Breast epithelium (tissue), 4 donors: ENCODE measurements at regions of chr10 and their contacts with region 1.

Region 1: DNA sequence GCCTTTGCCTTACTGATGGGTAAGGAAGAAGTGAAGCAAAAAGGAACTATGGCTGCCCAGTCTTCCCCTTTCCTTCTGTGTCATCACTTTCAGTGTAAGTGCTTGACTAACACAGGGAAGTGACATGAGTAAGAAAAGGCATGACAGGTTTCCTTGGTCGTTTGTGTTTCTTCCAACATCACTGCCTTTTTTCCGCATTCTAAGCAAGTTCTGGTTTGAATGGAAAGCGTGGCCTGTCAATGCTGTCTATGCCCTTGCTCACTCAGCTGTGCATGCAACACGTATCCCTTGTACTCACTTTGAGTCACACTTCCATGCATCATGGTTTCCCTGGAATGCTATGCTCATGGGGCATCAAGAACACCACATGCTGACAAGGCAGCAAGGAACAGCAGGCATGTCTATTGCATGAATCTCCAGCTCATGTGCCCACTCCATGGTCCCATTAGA is 111.8 kb downstream of the OAT start:
- DNase-seq: no peak
- H3K4me3 ChIP-seq: no peak overlapping the region
- H3K27ac ChIP-seq: no peak overlapping the region
- H3K4me1 ChIP-seq: no peaks in the 10 kb centered on the region
- H3K27me3 ChIP-seq: no peaks in the 10 kb centered on the region
- CTCF ChIP-seq: no peak
- POLR2A ChIP-seq: no peak

Region 2: DNA sequence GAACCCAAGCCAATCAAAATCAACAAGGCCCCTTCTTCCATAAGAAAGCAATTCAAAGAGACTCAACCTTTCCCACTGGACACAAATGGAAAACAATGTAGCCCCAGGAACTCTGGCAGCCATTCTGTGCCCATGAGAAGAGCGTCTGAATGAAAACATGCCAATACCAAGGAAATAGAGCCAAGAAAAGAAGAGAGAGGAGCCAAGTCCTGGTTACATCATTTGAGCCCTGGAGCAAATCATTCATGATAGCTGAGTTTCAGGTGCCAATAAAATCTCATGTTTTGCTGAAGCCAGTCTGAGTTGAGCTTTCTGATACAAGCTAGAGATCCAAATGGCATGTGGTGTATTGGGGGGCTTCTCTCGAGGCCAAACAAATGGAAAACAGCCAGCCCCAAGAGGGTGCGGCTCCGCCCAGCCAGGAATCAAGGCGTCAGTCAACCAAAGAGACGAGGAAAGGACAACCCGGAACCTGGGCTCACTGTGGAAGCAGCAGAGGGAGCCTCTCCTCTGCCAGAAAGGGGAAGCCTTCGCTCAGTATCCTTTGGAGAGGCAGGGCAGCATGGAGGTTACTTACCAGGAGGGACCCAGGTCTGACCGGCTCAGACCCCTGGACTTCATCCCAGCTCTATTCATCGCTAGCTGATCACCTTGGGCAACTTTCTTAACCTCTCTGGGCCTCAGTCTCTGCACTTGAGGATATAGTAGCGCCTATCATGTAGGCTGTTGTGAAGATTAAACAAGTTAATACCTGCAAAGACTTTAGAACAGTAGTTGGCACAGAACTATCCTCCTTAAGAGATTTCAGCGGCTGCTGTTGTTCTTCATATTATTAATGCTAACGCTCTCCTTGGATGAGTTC is 50.0 kb after region 1 on chr10:
- intact Hi-C with region 1: loop called (anchors 2 kb)
- DNase-seq: peak in 1 of 2 donors; percentile 27
- H3K4me3 ChIP-seq: peak overlapping the region in 1 of 3 donors; percentile 20
- H3K27ac ChIP-seq: peak overlapping the region; percentile 74 to 77
- H3K4me1 ChIP-seq: peaks cover 0 to 3% of the 10 kb centered on the region in 2 donors
- H3K27me3 ChIP-seq: no peaks in the 10 kb centered on the region
- CTCF ChIP-seq: no peak
- POLR2A ChIP-seq: no peak